ENCODE measurements at regions of chr3 and their contacts with region 1.

Region 1: GRCh38 chr3:12841149-12841970 is at the start of gene RPL32:
- DNase-seq: peak; percentile 89
- H3K4me3 Mint-ChIP-seq: peak within 1 kb of the TSS; percentile 98
- H3K27ac Mint-ChIP-seq: peak within 1 kb of the TSS; percentile 100
- H3K4me1 Mint-ChIP-seq: peaks cover 50% of the 10 kb centered on the region
- H3K27me3 Mint-ChIP-seq: no peaks in the 10 kb centered on the region
- total RNA-seq, gene RPL32: 2,113 to 2,760 TPM

Region 2: GRCh38 chr3:11438646-11439045 is 1402.7 kb before region 1 on chr3:
- CTCF ChIA-PET with region 1: no interaction called
- POLR2A ChIA-PET with region 1: no interaction called
- DNase-seq: no peak
- H3K4me3 Mint-ChIP-seq: no peak overlapping the region
- H3K27ac Mint-ChIP-seq: no peak overlapping the region
- H3K4me1 Mint-ChIP-seq: peaks cover 4% of the 10 kb centered on the region
- H3K27me3 Mint-ChIP-seq: no peaks in the 10 kb centered on the region

Region 3: GRCh38 chr3:12810013-12810780 is 31.2 kb before region 1 on chr3:
- CTCF ChIA-PET with region 1: interaction called, 14 read pairs
- POLR2A ChIA-PET with region 1: interaction called, 5 read pairs
- DNase-seq: peak; percentile 94
- H3K4me3 Mint-ChIP-seq: peak overlapping the region; percentile 63
- H3K27ac Mint-ChIP-seq: no peak overlapping the region
- H3K4me1 Mint-ChIP-seq: peaks cover 7% of the 10 kb centered on the region
- H3K27me3 Mint-ChIP-seq: peaks cover 3% of the 10 kb centered on the region

Region 4: DNA sequence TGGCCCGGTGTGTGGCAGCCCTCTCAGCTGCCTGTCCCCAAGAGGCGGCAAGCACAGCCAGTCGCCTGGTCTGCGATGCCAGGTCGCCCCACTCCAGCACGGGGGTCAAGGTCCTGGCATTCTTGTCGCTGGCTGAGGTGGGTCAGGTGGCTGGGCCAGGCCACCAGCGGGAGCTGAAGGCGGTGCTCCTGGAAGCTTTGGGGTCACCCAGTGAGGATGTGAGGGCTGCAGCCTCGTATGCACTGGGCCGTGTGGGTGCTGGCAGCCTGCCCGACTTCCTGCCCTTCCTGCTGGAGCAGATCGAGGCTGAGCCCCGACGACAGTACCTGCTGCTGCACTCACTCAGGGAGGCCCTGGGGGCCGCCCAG is 24.0 kb before region 1 on chr3:
- CTCF ChIA-PET with region 1: interaction called, 12 read pairs
- POLR2A ChIA-PET with region 1: no interaction called
- DNase-seq: no peak
- H3K4me3 Mint-ChIP-seq: no peak overlapping the region
- H3K27ac Mint-ChIP-seq: no peak overlapping the region
- H3K4me1 Mint-ChIP-seq: no peaks in the 10 kb centered on the region
- H3K27me3 Mint-ChIP-seq: no peaks in the 10 kb centered on the region

Region 5: GRCh38 chr3:12830785-12831156 is 10.6 kb before region 1 on chr3:
- CTCF ChIA-PET with region 1: interaction called, 37 read pairs
- POLR2A ChIA-PET with region 1: no interaction called
- DNase-seq: no peak
- H3K4me3 Mint-ChIP-seq: no peak overlapping the region
- H3K27ac Mint-ChIP-seq: no peak overlapping the region
- H3K4me1 Mint-ChIP-seq: no peaks in the 10 kb centered on the region
- H3K27me3 Mint-ChIP-seq: no peaks in the 10 kb centered on the region

Region 6: GRCh38 chr3:12853191-12853741 is 11.9 kb after region 1 on chr3:
- CTCF ChIA-PET with region 1: interaction called, 35 read pairs
- POLR2A ChIA-PET with region 1: no interaction called
- DNase-seq: no peak
- H3K4me3 Mint-ChIP-seq: no peak overlapping the region
- H3K27ac Mint-ChIP-seq: no peak overlapping the region
- H3K4me1 Mint-ChIP-seq: no peaks in the 10 kb centered on the region
- H3K27me3 Mint-ChIP-seq: peaks cover 15% of the 10 kb centered on the region

Region 7: DNA sequence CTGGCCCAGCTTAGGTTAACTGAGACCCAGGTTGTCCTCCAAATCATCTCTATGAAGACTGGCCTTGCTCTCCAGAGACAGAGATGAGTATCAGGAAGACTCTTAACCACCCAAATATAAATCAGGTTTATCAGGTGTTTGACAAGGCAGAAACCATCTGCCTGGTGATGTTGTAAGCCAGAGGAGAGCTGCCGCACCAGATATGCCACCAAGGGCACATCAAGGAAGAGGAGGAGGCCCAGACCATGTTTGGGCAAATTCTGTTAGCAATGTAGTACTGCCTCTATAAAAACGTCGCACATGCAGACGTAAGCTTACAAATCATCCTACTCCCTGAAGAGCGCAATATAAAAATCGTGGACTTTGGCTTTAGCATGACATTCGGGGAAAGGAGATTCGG is 21.0 kb after region 1 on chr3:
- CTCF ChIA-PET with region 1: interaction called, 35 read pairs
- POLR2A ChIA-PET with region 1: no interaction called
- DNase-seq: no peak
- H3K4me3 Mint-ChIP-seq: no peak overlapping the region
- H3K27ac Mint-ChIP-seq: no peak overlapping the region
- H3K4me1 Mint-ChIP-seq: no peaks in the 10 kb centered on the region
- H3K27me3 Mint-ChIP-seq: no peaks in the 10 kb centered on the region

Region 8: DNA sequence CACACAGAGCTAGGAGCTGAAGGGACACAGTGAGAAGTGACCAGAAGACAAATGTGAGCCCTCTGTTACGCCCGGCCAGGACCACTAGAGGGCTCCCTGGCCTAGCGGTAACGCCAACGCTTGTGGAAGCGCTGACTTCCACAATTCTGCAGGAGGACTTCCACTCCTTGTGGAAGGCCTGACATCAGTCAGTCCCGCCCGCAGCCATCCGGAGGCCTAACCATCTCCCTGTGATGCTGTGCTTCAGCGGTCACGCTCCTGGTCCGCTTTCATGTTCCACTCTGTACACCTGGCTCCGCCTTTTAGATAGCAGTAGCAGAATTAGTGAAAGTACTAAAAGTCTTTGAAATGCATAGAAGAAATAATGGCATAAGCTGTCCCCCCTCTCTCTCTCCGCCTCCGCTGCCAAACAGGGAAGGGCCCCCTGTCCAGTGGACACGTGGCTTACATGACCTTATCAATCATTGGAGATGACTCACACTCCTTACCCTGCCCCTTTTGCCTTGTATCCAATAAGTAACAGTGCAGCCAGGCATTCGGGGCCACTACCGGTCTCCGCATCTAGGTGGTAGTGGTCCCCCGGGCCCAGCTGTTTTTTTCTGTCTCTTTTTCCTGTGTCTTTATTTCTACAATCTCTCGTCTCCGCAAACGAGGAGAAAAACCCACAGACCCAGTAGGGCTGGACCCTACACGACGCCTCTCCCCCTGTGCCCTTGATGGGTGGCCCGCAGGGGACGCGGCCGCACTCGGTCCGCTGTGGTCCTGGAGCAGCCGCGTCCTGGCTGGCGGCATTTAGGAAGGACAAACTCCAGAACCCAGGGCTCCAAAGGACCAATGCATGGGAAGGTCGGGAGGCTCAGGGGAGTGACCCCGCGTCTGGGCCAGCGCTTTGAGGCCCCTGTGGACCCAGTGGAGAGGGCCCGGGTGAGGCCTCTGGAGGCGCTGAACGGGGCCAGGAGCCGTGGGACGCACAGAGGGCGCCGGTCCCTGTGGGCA is 27.0 kb after region 1 on chr3:
- CTCF ChIA-PET with region 1: interaction called, 11 read pairs
- POLR2A ChIA-PET with region 1: no interaction called
- DNase-seq: peak; percentile 61
- H3K4me3 Mint-ChIP-seq: peak overlapping the region; percentile 55
- H3K27ac Mint-ChIP-seq: no peak overlapping the region
- H3K4me1 Mint-ChIP-seq: peaks cover 14% of the 10 kb centered on the region
- H3K27me3 Mint-ChIP-seq: peaks cover 23% of the 10 kb centered on the region

Measured in activated CD4-positive, alpha-beta T cell treated with anti-CD3 and anti-CD28 coated beads, Interleukin-2, amount 10 ng/mL, durations not matched to agents 7 days and 5 days (primary cell).